ENCODE measurements at regions of chr17 and their contacts with region 1.

Region 1: GRCh38 chr17:50177983-50178834 is 12.4 kb downstream of the SGCA start:
- DNase-seq: peak; percentile 93 to 98
- H3K4me3 ChIP-seq: no peak overlapping the region
- H3K27ac ChIP-seq: peak overlapping the region; percentile 97 to 99
- H3K4me1 ChIP-seq: peaks cover 24 to 44% of the 10 kb centered on the region in 2 donors
- H3K27me3 ChIP-seq: no peaks in the 10 kb centered on the region
- CTCF ChIP-seq: peak; percentile 32 to 49 (median 34)

Region 2: DNA sequence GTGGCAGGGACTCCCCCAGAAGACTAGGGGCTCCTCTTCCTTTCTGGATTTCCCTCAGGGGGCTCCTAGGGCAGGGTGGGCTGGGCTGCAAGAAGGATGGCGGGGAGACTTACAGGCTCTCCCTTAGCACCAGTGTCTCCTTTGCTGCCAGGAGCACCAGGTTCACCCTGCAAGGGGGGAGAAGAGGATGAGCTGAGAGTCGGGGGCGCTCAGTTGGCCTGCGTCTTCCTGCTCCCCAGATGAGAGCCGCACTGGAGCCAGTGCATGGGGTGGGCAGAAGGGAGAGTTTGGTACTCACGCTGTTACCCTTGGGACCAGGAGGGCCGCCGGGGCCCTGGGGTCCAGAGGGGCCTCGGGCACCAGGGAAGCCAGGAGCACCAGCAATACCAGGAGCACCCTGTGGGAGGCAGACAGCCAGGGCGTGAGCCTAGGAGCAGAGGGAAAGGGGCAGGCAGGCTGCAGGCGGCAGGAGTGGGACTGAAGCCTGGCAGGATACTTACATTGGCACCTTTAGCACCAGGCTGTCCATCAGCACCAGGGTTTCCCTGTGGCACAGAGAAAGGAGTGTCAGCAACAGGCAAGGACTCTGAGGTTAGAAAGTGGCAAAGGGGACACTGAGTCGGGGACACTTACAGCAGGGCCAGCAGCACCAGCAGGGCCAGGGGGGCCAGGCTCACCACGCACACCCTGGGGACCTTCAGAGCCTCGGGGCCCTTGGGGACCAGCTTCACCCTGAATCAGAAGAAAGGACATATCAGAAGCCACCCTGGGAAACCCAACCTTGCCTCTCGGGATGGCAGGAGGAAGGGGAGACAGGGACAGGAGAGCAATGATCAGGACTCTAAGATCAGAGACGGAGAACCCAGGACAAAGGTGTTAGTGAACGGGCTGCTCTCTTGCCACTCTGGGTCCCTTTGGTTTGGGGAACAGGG is 17.0 kb after region 1 on chr17:
- intact Hi-C with region 1: loop called (anchors 1 kb)
- DNase-seq: no peak
- H3K4me3 ChIP-seq: no peak overlapping the region
- H3K27ac ChIP-seq: peak overlapping the region; percentile 97 to 99
- H3K4me1 ChIP-seq: peaks cover 13 to 50% of the 10 kb centered on the region in 2 donors
- H3K27me3 ChIP-seq: no peaks in the 10 kb centered on the region
- CTCF ChIP-seq: peak in 1 of 3 experiments; percentile 31